ENCODE measurements at regions of chr9 and their contacts with region 1.

Region 1: DNA sequence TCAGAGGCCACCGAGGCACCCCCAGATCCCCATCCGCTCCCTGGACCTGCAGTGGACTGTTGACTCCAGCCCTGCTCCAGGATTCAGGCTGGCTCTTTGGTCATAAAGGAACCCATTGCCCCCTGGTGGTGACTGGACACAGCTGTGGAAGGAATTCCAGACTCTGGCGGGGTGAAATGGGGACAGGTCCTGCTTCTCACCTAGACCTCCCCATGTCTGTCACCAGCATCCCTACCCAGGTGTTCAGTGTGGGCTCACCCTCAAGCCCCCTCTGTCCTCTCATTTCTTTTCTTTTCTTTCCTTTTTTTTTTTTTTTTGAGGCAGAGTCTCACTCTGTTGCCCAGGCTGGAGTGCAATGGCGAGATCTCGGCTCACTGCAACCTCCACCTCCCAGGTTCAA is 25.5 kb upstream of the STXBP1 start:
- DNase-seq: peak; percentile 77
- ATAC-seq: peak; percentile 76
- H3K4me3 Mint-ChIP-seq: no peak overlapping the region
- H3K27ac Mint-ChIP-seq: no peak overlapping the region
- H3K4me1 Mint-ChIP-seq: peaks cover 6% of the 10 kb centered on the region
- H3K27me3 Mint-ChIP-seq: peaks cover 9% of the 10 kb centered on the region
- CTCF ChIP-seq: peak; percentile 80

Region 2: GRCh38 chr9:127503947-127504782 is 82.4 kb before region 1 on chr9:
- CTCF ChIA-PET with region 1: interaction called, 40 read pairs
- POLR2A ChIA-PET with region 1: no interaction called
- intact Hi-C with region 1: loop called (anchors 2 kb)
- DNase-seq: peak; percentile 92
- ATAC-seq: peak; percentile 94
- H3K4me3 Mint-ChIP-seq: no peak overlapping the region
- H3K27ac Mint-ChIP-seq: no peak overlapping the region
- H3K4me1 Mint-ChIP-seq: no peaks in the 10 kb centered on the region
- H3K27me3 Mint-ChIP-seq: no peaks in the 10 kb centered on the region
- CTCF ChIP-seq: peak; percentile 88

Region 3: DNA sequence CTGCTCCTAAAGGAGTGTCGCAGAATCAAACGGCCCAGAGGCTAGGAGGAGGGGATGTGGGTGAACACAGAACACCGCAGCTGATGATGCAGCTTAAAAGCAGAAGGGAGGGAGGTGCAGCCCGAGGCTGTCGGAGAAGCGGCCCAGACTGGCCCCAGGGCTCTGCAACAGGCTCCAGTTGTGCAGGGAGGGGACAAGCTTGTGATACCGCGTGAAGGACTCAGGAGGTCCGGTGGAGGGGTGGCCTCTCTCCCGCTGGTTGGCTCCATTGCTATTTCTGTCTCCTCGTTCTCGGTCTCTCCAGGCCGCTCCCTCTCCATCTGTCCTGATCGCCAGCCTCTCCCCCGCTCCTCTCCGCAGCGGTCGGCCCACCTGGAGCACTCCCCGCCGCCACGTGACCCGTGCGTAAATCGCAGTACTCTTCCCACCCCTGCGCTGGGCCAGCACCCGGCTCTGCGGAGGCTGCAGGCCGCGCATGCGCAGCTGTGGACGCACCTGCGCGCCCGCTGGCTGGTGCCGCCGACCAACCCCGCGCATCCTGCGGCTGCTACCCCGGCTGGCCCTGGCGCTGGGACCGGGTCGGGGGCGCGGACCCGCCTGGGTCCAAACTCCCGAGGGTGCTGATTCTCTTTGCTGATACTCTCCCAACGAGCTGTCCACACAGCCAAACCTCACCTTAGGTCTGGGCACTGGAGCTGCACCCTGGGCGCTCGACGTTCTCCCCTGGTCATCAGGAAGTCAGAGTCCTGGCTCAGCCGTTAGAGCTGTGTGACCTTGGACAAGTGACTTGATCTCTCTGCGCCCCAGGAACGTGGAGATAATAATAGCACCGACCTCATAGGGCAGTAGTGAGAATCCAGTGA is 21.8 kb after region 1 on chr9:
- CTCF ChIA-PET with region 1: interaction called, 11 read pairs
- POLR2A ChIA-PET with region 1: no interaction called
- intact Hi-C with region 1: no loop called
- DNase-seq: peak; percentile 76
- ATAC-seq: peak; percentile 60
- H3K4me3 Mint-ChIP-seq: peak overlapping the region; percentile 77
- H3K27ac Mint-ChIP-seq: peak overlapping the region; percentile 38
- H3K4me1 Mint-ChIP-seq: peaks cover 24% of the 10 kb centered on the region
- H3K27me3 Mint-ChIP-seq: peaks cover 15% of the 10 kb centered on the region
- CTCF ChIP-seq: no peak

Region 4: DNA sequence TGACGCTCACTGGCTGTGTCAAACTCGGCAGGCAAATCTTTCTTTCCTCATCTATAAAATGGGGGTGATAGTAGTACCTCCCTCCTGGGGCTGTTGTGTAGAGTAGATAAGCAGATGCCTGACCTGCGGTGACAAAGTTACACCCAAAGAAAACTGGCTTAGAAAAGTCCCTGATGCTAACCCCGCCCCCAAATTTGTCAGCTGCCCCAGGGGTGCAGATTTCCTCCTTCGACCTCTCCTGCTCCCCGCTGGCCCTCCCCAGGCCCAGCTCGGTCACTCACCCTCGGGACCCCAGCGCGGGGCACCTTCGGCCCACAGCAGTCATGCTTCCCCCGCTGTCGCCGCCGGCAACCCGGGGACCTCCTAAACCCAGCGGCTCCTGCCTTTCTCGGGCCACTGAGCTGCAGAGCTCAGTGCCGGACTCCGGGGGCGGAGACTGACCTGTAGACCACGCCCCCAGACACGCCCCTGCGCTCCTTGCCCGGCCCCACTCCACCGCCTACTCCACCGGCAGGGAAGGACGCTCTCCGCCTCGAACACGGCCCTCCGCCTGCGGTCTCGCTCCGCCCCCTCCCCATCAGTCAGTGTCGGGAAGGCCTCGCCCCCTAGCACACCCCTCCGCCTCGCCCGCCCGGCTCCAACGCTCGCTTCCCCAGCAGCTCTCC is 184.5 kb after region 1 on chr9:
- CTCF ChIA-PET with region 1: no interaction called
- POLR2A ChIA-PET with region 1: no interaction called
- intact Hi-C with region 1: no loop called
- DNase-seq: peak; percentile 99
- ATAC-seq: peak; percentile 93
- H3K4me3 Mint-ChIP-seq: peak overlapping the region; percentile 83
- H3K27ac Mint-ChIP-seq: peak overlapping the region; percentile 87
- H3K4me1 Mint-ChIP-seq: peaks cover 62% of the 10 kb centered on the region
- H3K27me3 Mint-ChIP-seq: no peaks in the 10 kb centered on the region
- CTCF ChIP-seq: no peak